Activated CD8-positive, alpha-beta memory T cell treated with anti-CD3 and anti-CD28 coated beads, Interleukin-2, amount 10 ng/mL, durations not matched to agents 7 days and 5 days (primary cell): ENCODE measurements at regions of chr1 and their contacts with region 1.

Region 1: DNA sequence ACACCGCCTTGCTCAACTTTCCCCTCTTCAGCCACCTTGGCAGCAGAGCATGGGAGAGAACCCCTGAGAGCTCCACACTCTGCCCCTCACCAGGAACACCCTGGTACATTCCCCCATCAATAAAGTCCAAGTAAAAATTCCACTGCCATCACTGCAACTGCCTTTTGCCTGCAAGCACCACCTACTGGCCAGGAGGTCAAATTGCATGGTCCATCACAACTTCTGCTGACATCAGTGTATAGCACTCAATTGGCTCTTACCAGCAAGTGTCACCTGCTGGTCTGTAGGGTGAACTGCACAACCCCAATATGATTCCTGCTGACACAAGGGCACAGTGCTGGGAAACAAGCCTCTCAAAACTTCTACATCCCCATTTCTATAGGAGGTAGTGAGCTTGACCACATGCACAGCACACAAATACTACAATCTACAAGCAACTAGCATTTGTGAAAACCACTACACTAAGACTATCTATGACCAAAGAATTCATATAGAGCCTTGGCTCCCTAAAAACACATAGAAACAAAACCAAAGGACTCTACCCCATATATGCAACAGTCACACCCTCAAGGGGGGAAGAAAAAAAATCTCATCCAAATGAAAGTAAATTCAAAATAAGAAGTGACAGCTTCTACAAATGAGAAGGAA is 69.2 kb downstream of the FASLG start:
- DNase-seq: peak; percentile 72
- ATAC-seq: peak; percentile 80
- H3K4me3 Mint-ChIP-seq: no peak overlapping the region
- H3K27ac Mint-ChIP-seq: peak overlapping the region; percentile 12
- H3K4me1 Mint-ChIP-seq: peaks cover 35% of the 10 kb centered on the region
- H3K27me3 Mint-ChIP-seq: peaks cover 23% of the 10 kb centered on the region

Region 2: GRCh38 chr1:172532700-172533509 is 195.2 kb before region 1 on chr1 and contains the start of gene SUCO:
- CTCF ChIA-PET with region 1: interaction called, 11 read pairs
- DNase-seq: peak; percentile 100
- ATAC-seq: peak; percentile 87
- H3K4me3 Mint-ChIP-seq: peak within 1 kb of the TSS; percentile 95
- H3K27ac Mint-ChIP-seq: peak within 1 kb of the TSS; percentile 99
- H3K4me1 Mint-ChIP-seq: peaks cover 45% of the 10 kb centered on the region
- H3K27me3 Mint-ChIP-seq: peaks cover 6% of the 10 kb centered on the region
- total RNA-seq, gene SUCO: 28.9 to 32.8 TPM

Region 3: GRCh38 chr1:172662464-172663109 is 65.5 kb before region 1 on chr1:
- CTCF ChIA-PET with region 1: interaction called, 35 read pairs
- DNase-seq: peak; percentile 97
- ATAC-seq: peak; percentile 81
- H3K4me3 Mint-ChIP-seq: peak overlapping the region; percentile 94
- H3K27ac Mint-ChIP-seq: peak overlapping the region; percentile 96
- H3K4me1 Mint-ChIP-seq: peaks cover 78% of the 10 kb centered on the region
- H3K27me3 Mint-ChIP-seq: no peaks in the 10 kb centered on the region

Region 4: DNA sequence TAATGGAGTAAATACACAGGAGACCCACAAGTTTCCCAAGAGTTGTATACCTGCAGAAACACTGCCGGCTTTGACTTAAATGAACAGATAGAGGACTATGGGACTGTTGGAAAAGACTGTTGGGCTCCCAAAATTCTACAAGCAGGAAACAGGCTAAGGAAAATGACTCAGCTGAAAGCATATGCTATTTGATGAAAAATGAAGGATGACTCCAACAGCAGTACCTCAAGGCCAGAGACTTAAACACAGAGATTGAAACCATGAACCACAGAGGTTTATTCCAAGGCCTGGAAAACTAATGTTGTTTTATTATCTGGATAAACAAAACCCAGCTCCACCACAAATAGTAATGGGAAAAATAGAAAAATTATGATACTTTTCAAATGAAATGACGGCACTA is 135.0 kb after region 1 on chr1:
- CTCF ChIA-PET with region 1: no interaction called
- DNase-seq: no peak
- ATAC-seq: no peak
- H3K4me3 Mint-ChIP-seq: no peak overlapping the region
- H3K27ac Mint-ChIP-seq: no peak overlapping the region
- H3K4me1 Mint-ChIP-seq: peaks cover 1% of the 10 kb centered on the region
- H3K27me3 Mint-ChIP-seq: peaks cover 24% of the 10 kb centered on the region